Dorsolateral prefrontal cortex (tissue), 120 donors: ENCODE measurements at regions of chr21 and their contacts with region 1.

Region 1: DNA sequence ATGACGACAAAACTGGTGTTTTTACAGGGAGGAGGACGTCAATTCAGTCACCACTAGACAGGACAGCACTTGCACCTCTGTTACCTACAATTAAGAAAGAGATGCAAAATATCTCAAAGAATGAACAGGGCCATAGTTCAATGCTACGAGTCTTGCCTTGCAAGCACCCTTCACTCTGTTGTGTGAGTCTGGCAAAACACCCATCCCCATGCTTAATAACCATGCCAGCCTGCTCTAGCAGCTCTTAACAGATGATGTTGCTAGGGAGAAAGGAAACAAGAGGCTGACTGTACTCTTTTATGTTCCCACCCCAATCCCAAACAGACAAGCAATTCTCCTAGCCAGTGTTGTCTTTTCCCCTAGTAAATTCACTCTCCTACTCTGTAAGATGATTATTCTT is 5.3 kb downstream of the CBR1 start:
- DNase-seq: peak in 4 of 10 donors; percentile 45 to 69 (median 65)
- H3K4me3 ChIP-seq: peak overlapping the region in 37 of 59 donors; percentile 0 to 94 (median 27)
- H3K27ac ChIP-seq: peak overlapping the region; percentile 77 to 98 (median 95)
- H3K27me3 ChIP-seq: no peaks in the 10 kb centered on the region
- CTCF ChIP-seq: peak in 3 of 56 donors; percentile 7 to 15 (median 9)

Region 2: GRCh38 chr21:35796844-35797243 is 278.3 kb before region 1 on chr21:
- intact Hi-C with region 1: no loop called
- DNase-seq: no peak
- H3K4me3 ChIP-seq: peak overlapping the region in 2 of 59 donors; percentile 9 to 28
- H3K27ac ChIP-seq: no peak overlapping the region
- H3K27me3 ChIP-seq: peaks cover 0 to 4% (median 0%) of the 10 kb centered on the region in 45 donors
- CTCF ChIP-seq: no peak

Region 3: DNA sequence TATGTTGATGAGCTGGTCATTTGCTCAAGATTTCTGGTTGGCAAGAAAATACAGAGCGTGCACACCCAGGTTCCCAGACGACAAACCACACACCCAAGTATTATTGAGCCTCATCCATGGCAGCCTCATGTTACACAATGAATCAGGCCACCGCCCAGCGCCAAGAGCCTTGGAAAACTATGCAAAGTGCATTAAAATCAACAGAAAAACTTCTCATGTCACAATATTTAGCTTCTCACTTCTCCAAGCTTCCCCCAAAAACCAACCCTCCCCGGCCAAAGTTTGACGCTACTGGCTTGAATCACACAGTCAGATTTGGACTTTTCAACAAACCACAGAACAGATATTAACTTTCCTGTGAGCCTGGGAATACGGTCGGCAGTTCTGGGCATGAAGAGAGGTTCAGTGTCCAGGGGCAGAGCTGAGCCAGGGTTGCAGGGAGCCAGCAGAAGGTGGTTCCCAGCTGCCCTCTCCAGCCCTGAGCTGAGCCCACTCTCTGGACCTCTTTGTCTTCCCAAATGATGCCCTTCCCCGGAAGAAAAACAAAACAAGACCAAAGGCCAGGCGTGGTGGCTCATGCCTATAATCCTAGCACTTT is 85.9 kb before region 1 on chr21:
- intact Hi-C with region 1: no loop called
- DNase-seq: no peak
- H3K4me3 ChIP-seq: no peak overlapping the region
- H3K27ac ChIP-seq: no peak overlapping the region
- H3K27me3 ChIP-seq: peaks cover 0 to 21% (median 0%) of the 10 kb centered on the region in 45 donors
- CTCF ChIP-seq: no peak

Region 4: DNA sequence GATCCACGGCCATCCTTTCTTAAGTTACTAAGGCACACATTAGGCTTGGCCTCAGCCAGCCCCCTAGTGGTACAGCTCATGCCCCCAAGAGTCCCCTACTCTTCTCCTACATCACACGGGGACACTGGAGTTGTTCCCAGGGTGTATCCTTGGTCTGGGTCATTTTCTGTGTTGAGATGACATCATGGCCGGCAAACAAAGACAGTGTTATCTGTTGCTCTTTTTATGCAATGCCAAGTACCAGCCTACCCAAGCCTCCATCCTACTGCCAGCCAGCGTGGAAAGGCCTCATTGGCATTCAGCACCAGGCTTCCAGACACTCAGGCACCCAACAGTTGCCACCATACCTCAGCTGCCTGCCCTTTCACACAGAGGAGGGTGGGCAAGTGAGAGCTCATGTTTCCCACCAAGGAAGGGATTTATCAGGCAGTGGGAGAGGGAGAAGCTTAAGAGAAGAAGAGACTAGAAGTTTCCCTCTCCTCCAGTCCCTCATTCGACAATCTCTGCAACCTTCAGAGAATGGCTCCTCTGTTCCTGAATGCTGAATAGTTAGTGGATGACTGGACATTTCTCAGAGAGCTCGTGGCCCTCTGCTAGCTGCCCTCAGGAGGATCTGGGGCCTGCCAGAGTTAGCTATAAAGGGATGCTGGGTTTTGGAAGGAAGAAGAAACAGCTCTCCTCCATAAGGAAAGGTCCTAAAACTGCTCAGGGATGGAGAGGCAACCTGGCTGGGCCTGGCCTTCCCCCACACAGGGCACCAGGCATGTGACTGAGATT is 12.4 kb after region 1 on chr21:
- intact Hi-C with region 1: loop called in 1 of 2 experiments (anchors 1 kb)
- DNase-seq: peak; percentile 18 to 93 (median 88)
- H3K4me3 ChIP-seq: peak overlapping the region in 4 of 59 donors; percentile 2 to 34 (median 6)
- H3K27ac ChIP-seq: peak overlapping the region; percentile 79 to 100 (median 96)
- H3K27me3 ChIP-seq: no peaks in the 10 kb centered on the region
- CTCF ChIP-seq: peak in 52 of 56 donors; percentile 16 to 69 (median 48)

Region 5: GRCh38 chr21:36369064-36369685 is 294.0 kb after region 1 on chr21:
- intact Hi-C with region 1: no loop called
- DNase-seq: no peak
- H3K4me3 ChIP-seq: no peak overlapping the region
- H3K27ac ChIP-seq: peak overlapping the region in 20 of 59 donors; percentile 7 to 56 (median 36)
- H3K27me3 ChIP-seq: no peaks in the 10 kb centered on the region
- CTCF ChIP-seq: no peak